ENCODE measurements at regions of chr10 and their contacts with region 1.

Region 1: GRCh38 chr10:72340510-72341261 is 14.0 kb downstream of the DNAJB12 start:
- DNase-seq: peak; percentile 74 to 90 (median 89)
- ATAC-seq: peak; percentile 4 to 40
- H3K4me3 ChIP-seq: no peak overlapping the region
- H3K27ac ChIP-seq: no peak overlapping the region
- H3K4me1 ChIP-seq: peaks cover 10% of the 10 kb centered on the region
- H3K27me3 ChIP-seq: no peaks in the 10 kb centered on the region

Region 2: DNA sequence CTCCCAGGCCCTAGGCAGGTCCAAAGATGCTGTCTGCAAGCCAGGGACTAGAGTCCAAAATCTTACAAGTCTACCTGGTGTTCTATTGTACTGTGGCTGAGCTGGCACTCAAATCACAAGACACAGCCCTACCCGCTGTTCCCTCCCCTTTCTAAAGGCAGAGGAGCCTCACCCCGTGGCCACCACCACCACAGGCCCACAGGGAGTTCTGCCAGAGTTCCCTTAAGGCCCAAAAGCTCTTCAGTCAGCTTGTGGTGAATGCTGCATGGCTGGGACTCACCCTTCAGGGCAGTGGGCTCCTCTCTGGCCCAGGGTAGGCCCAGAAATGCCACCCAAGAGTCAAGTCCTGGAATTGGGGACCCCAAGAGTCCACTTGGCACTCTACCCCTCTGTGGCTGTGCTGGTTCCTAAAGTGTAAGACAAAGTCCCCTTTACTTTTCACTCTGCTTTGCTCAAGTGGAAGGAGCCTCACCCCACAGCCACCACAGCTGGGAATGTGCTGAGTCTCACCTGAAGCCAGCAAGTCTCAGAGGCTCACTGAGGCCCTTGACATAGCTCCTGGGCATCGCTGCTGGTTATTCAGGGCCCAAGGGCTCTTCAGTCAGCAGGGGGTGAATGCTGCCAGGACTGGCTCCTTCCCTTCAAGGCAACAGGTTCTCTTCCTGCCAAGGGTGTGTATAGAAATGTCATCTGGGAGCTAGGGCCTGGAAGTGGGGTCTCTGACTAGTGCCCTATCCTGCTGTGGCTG is 440.8 kb before region 1 on chr10:
- intact Hi-C with region 1: loop called in 1 of 4 experiments (anchors 5 kb)
- DNase-seq: no peak
- ATAC-seq: no peak
- H3K4me3 ChIP-seq: no peak overlapping the region
- H3K27ac ChIP-seq: no peak overlapping the region
- H3K4me1 ChIP-seq: no peaks in the 10 kb centered on the region
- H3K27me3 ChIP-seq: no peaks in the 10 kb centered on the region

Measured in right cardiac atrium (tissue), 5 donors.